ENCODE measurements at regions of chr2 and their contacts with region 1.

Region 1: DNA sequence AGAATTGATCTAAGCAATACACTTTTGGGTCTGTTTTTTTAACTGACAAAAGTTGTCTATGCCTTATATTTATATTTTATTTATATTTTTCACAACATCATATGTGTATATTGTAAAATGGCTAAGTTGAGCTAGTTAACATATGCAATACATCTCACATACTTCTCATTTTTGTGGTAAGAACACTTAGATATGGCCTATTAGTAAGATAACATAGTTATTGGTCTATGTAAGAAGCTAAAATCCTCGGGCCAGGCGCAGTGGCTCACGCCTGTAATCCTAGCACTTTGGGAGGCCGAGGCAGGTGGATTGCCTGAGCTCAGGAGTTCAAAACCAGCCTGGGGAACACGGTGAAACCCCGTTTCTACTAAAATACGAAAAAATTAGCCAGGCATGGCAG is 275.6 kb upstream of the ID2 start:
- DNase-seq: no peak
- H3K4me3 ChIP-seq: no peak overlapping the region
- H3K27ac ChIP-seq: no peak overlapping the region
- H3K4me1 ChIP-seq: peaks cover 0 to 7% (median 5%) of the 10 kb centered on the region in 4 experiments
- H3K27me3 ChIP-seq: no peaks in the 10 kb centered on the region

Region 2: DNA sequence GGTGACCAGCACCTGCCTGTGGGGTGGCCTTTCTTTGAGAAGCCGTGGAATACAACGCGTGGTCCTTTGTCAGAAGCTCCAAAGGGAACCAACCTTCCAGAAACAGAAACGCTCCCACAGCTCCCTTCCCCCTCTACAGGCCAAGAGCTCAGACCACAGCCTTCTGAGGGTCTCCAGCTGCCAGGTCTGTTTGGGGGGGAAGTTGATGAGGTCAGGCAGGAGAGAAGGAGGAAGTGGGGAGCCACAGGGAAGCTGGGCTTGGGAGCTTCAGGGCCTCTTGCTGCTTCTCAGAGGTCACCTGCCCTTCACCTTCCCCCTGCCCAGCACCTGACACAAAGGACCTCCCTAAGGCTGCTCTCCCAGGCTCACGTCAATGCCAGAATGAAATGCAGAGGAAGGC is 12.1 kb before region 1 on chr2:
- CTCF ChIA-PET with region 1: interaction called, 11 read pairs
- POLR2A ChIA-PET with region 1: interaction called, 3 read pairs
- DNase-seq: peak; percentile 63 to 67 (median 63)
- H3K4me3 ChIP-seq: no peak overlapping the region
- H3K27ac ChIP-seq: no peak overlapping the region
- H3K4me1 ChIP-seq: peaks cover 2 to 38% (median 21%) of the 10 kb centered on the region in 4 experiments
- H3K27me3 ChIP-seq: no peaks in the 10 kb centered on the region